Colonic mucosa (tissue), 4 donors: ENCODE measurements at regions of chr1 and their contacts with region 1.

Region 1: GRCh38 chr1:53878492-53879105 is 11.0 kb downstream of the YIPF1 start:
- DNase-seq: no peak
- H3K4me3 ChIP-seq: no peak overlapping the region
- H3K27ac ChIP-seq: no peak overlapping the region
- H3K4me1 ChIP-seq: no peaks in the 10 kb centered on the region
- H3K27me3 ChIP-seq: no peaks in the 10 kb centered on the region
- CTCF ChIP-seq: peak; percentile 48

Region 2: DNA sequence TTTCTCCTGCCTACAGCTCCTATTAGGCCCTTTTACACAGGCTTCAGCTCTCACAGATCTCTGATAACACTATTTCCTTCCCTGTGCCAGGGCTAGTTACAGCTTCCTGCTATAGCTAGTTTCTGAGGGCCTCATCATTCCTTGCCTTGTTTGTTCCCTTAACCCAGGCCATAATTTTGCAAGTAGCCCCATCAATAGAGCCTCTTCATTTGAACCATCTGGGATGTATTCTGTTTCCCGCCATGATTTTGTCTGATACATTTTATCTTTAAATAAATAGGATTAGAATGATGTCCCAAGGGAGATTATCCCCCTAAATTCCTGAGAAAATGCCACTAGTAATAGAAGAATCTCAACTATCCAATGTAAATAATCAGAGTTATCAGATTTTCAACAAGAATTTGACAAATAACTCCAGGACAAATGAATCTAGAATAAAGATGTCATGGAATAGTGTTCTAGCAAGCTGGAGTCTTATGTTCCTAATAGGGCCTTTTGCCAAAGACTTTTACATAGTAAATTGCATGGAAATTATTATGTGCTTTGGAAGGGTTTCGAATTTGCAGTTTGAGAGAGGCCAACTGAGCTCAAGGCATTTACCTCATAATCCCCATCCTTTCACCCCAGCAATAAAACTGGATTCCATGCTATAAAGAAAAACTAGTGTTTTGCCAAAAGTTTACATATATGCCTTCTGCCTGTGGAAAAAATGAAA is 50.8 kb after region 1 on chr1:
- intact Hi-C with region 1: no loop called
- DNase-seq: no peak
- H3K4me3 ChIP-seq: no peak overlapping the region
- H3K27ac ChIP-seq: no peak overlapping the region
- H3K4me1 ChIP-seq: no peaks in the 10 kb centered on the region
- H3K27me3 ChIP-seq: no peaks in the 10 kb centered on the region
- CTCF ChIP-seq: no peak

Region 3: GRCh38 chr1:53945433-53946251 is 67.0 kb after region 1 on chr1 and contains the start of gene IFT25:
- intact Hi-C with region 1: loop called (anchors 5 kb)
- DNase-seq: peak; percentile 99
- H3K4me3 ChIP-seq: peak within 1 kb of the TSS; percentile 73
- H3K27ac ChIP-seq: peak within 1 kb of the TSS; percentile 89
- H3K4me1 ChIP-seq: peaks cover 3% of the 10 kb centered on the region
- H3K27me3 ChIP-seq: no peaks in the 10 kb centered on the region
- CTCF ChIP-seq: no peak
- total RNA-seq, gene IFT25: 15.1 to 17.5 TPM

Region 4: DNA sequence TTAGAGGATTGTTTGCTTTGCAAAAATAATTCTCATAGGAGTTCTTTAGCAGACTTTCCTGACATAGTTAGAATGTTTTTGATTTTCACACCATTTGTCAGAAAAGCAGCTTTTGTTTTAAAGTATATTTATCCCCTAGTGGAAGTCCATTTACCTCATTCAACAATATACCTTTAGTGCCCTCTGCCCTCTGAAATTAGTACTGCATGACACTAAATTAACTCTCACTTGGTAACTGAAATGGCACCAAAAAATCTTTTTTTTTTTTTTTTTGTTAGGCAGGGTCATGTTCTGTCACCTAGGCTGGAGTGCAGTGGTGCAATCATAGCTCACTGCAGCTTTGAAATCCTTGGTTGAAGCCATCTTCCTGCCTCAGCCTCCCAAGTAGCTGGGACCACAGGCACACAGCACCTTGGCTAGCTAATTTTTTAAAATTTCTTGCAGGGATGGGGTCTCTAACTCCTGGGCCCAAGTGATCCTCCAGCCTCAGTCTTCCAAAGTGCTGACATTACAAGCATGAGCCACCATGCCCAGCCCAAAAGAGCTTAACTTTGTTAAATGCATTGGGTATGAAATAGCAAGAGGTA is 81.2 kb after region 1 on chr1:
- intact Hi-C with region 1: loop called (anchors 5 kb)
- DNase-seq: no peak
- H3K4me3 ChIP-seq: no peak overlapping the region
- H3K27ac ChIP-seq: no peak overlapping the region
- H3K4me1 ChIP-seq: no peaks in the 10 kb centered on the region
- H3K27me3 ChIP-seq: no peaks in the 10 kb centered on the region
- CTCF ChIP-seq: peak; percentile 62

Region 5: DNA sequence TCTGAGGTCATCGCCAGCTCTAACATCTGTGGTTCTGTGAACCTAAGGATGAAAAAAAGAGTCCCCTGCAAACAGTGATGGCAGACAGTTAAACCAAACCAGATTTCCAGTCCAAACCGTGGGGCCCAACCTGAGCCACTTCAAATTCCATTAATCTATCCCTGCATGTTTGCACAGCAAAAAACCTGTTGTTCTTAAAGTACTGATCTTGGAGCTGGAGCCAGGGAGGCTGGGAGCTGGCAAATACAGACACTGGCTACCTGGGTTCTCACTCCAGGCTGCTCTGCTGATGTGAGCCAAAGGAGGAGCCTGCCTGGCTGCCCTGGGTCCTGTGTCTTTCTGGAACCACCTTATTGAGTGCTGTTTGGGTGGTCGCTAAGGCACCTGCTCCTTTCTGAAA is 123.0 kb after region 1 on chr1:
- intact Hi-C with region 1: no loop called
- DNase-seq: no peak
- H3K4me3 ChIP-seq: no peak overlapping the region
- H3K27ac ChIP-seq: no peak overlapping the region
- H3K4me1 ChIP-seq: no peaks in the 10 kb centered on the region
- H3K27me3 ChIP-seq: no peaks in the 10 kb centered on the region
- CTCF ChIP-seq: no peak